ENCODE measurements at regions of chr20 and their contacts with region 1.

Region 1: DNA sequence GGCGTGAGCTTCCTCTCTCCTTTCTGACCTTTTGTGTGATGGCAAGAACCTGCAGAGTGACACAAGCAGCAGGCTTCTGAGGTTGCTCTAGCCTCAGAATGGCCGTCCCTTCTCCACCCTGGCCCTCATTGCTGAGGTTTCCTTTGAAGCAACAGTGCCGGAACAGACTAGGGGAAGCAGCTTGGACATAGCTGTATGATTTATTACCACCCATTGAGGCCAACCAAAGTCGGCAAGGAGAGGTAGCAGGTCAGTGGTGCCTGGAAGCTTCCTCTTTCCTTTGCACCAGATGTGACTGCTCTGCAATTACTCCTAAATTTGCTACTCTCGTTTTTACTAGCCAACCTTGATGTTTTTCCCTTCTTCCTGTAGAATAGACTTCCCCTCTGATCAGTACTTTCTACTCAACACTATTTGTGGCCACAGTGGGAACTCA is 31.4 kb downstream of the PTPN1 start:
- DNase-seq: no peak
- ATAC-seq: peak; percentile 14
- H3K4me3 Mint-ChIP-seq: no peak overlapping the region
- H3K27ac Mint-ChIP-seq: peak overlapping the region; percentile 52
- H3K4me1 Mint-ChIP-seq: peaks cover 83% of the 10 kb centered on the region
- H3K27me3 Mint-ChIP-seq: no peaks in the 10 kb centered on the region

Region 2: DNA sequence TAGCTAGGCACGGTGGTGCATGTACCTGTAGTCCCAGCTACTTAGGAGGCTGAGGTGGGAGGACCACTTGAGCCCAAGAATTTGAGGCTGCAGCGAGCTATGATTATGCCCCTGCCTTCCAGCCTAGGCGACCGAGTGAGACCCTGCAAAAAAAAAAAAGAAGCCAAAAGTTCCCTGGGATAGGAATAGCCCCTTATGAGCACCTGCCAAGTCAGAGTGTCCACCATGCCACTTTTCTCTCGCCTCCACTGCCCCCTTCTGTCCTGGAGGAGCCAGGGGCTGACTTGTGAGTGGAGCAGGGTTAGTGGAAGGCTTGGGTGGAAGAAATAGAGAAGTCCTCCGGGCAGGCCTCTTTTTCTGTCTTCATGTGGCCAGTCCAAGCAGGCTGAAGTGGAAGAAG is 1334.5 kb before region 1 on chr20:
- CTCF ChIA-PET with region 1: no interaction called
- POLR2A ChIA-PET with region 1: no interaction called
- intact Hi-C with region 1: no loop called
- DNase-seq: peak; percentile 55
- ATAC-seq: peak; percentile 64
- H3K4me3 Mint-ChIP-seq: no peak overlapping the region
- H3K27ac Mint-ChIP-seq: no peak overlapping the region
- H3K4me1 Mint-ChIP-seq: no peaks in the 10 kb centered on the region
- H3K27me3 Mint-ChIP-seq: no peaks in the 10 kb centered on the region

Region 3: GRCh38 chr20:50528804-50529351 is 12.7 kb before region 1 on chr20:
- CTCF ChIA-PET with region 1: interaction called, 6 read pairs
- POLR2A ChIA-PET with region 1: interaction called, 4 read pairs
- intact Hi-C with region 1: loop called in 1 of 2 experiments (anchors 2 kb)
- DNase-seq: no peak
- ATAC-seq: peak; percentile 73
- H3K4me3 Mint-ChIP-seq: no peak overlapping the region
- H3K27ac Mint-ChIP-seq: peak overlapping the region; percentile 58
- H3K4me1 Mint-ChIP-seq: peaks cover 30% of the 10 kb centered on the region
- H3K27me3 Mint-ChIP-seq: no peaks in the 10 kb centered on the region